ENCODE measurements at regions of chr21 and their contacts with region 1.

Region 1: DNA sequence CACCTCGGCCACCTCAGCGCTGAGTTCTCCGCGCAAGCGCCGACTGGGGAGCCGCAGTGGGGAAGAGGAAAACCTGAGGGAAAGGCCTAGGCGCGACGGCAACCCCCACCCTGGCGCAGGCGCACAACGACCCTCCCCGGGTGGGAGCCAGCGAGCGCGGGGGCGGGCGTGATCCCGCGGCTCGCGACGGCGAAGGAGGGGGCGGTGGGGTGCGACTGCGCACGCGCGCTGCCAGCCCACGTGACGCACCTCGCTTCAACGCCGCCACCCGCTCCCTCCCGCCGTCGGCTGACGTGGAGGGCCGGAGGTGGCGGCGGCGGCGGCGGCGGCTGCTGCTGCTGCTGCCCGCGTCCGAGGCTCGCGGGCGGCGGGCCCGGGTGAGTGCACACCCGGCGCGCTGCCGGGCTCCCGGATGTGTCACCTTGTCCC is at the starts of genes PIGP and TTC3:
- DNase-seq: peak; percentile 97 to 99
- ATAC-seq: peak; percentile 96
- H3K4me3 ChIP-seq: peak within 1 kb of the TSS; percentile 55 to 78
- H3K27ac ChIP-seq: peak within 1 kb of the TSS; percentile 97 to 98
- H3K4me1 ChIP-seq: no peaks in the 10 kb centered on the region
- H3K27me3 ChIP-seq: no peaks in the 10 kb centered on the region
- total RNA-seq, gene PIGP: 15.8 to 18.1 TPM
- total RNA-seq, gene TTC3: 105 to 118 TPM

Region 2: GRCh38 chr21:36820176-36821031 is 252.6 kb before region 1 on chr21:
- intact Hi-C with region 1: no loop called
- DNase-seq: no peak
- ATAC-seq: no peak
- H3K4me3 ChIP-seq: no peak overlapping the region
- H3K27ac ChIP-seq: no peak overlapping the region
- H3K4me1 ChIP-seq: no peaks in the 10 kb centered on the region
- H3K27me3 ChIP-seq: no peaks in the 10 kb centered on the region

Region 3: GRCh38 chr21:36976882-36977651 is 95.9 kb before region 1 on chr21:
- intact Hi-C with region 1: loop called (anchors 10 kb)
- DNase-seq: no peak
- ATAC-seq: no peak
- H3K4me3 ChIP-seq: no peak overlapping the region
- H3K27ac ChIP-seq: no peak overlapping the region
- H3K4me1 ChIP-seq: no peaks in the 10 kb centered on the region
- H3K27me3 ChIP-seq: no peaks in the 10 kb centered on the region

Region 4: GRCh38 chr21:36989699-36990507 is 83.1 kb before region 1 on chr21:
- intact Hi-C with region 1: loop called in 1 of 2 experiments (anchors 10 kb)
- DNase-seq: peak; percentile 96 to 98
- ATAC-seq: peak; percentile 98
- H3K4me3 ChIP-seq: peak overlapping the region in 1 of 2 donors; percentile 34
- H3K27ac ChIP-seq: peak overlapping the region in 1 of 2 donors; percentile 72
- H3K4me1 ChIP-seq: no peaks in the 10 kb centered on the region
- H3K27me3 ChIP-seq: no peaks in the 10 kb centered on the region

Region 5: GRCh38 chr21:37017951-37018679 is 54.9 kb before region 1 on chr21:
- intact Hi-C with region 1: no loop called
- DNase-seq: no peak
- ATAC-seq: no peak
- H3K4me3 ChIP-seq: no peak overlapping the region
- H3K27ac ChIP-seq: no peak overlapping the region
- H3K4me1 ChIP-seq: no peaks in the 10 kb centered on the region
- H3K27me3 ChIP-seq: no peaks in the 10 kb centered on the region